GM12878 (cell line): ENCODE measurements at regions of chr5 and their contacts with region 1.

Region 1: DNA sequence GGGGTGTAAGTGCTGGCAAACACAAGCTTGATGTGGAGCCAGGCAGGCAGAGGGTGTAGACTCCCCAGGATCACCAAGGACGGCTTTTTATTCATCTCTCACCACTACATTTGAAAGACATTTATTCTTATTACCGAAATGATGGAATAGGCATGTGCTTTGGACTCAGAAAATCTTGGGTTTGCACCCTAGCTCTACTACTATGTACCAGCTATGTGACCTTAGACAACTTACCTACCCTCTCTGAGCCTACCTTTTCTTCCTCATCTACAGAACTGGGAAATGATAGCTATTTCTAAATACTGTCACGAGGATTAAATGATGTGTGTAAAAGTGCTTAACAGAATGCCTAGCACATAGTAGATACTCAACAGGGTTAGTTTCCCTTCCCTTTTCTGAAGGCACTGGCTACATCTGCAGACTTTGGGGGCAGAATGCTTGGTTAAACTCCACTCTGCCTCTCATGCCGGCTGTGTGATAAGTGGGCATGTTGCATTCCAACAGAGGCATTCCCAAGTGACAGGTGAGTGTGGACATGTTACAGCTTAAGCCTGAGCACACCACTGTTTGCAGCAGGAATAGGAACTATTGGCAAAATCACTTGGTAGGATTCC is 94.8 kb downstream of the SLC1A3 start:
- DNase-seq: peak; percentile 55
- ATAC-seq: peak; percentile 98
- H3K4me3 ChIP-seq: no peak overlapping the region
- H3K27ac ChIP-seq: peak overlapping the region; percentile 46
- H3K4me1 ChIP-seq: peaks cover 23% of the 10 kb centered on the region
- H3K27me3 ChIP-seq: no peaks in the 10 kb centered on the region
- CTCF ChIP-seq: no peak
- EP300 ChIP-seq: peak in 1 of 2 experiments; percentile 58; a peak in 2 of 4 replicates
- POLR2A ChIP-seq: no peak
- RAD21 ChIP-seq: no peak

Region 2: DNA sequence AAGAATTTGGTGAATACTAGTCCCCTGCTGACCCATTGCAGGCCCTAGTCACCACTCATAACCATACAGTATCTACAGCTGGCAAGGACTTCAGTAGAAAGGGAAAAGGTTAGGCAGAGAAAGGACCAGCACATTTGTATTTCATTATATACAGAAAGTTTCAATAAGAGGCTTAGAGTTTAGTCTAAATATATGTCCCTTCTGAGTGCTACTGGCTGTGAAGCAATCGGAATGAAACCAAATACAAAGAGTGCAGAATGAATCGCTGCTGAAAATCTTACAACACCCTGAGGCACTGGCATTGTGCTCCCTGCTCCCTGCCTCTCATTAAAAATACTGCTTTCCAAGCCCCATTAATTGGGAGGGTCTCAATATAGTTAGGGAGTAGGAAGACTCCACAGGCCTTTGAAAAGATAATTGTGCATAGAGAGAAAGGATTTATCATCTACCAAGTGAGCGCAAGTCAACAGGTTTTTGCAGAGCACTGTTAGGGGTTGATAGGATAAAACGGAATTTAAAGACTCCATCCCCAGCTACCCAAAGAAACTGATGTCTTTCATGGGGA is 16.0 kb after region 1 on chr5:
- CTCF ChIA-PET with region 1: interaction called, 202 read pairs
- POLR2A ChIA-PET with region 1: interaction called, 33 read pairs
- RAD21 ChIA-PET with region 1: interaction called, 65 read pairs
- SMC1A ChIA-PET with region 1: interaction called, 176 read pairs
- in situ Hi-C with region 1: no loop called
- intact Hi-C with region 1: no loop called
- DNase-seq: no peak
- ATAC-seq: no peak
- H3K4me3 ChIP-seq: no peak overlapping the region
- H3K27ac ChIP-seq: no peak overlapping the region
- H3K4me1 ChIP-seq: peaks cover 29% of the 10 kb centered on the region
- H3K27me3 ChIP-seq: no peaks in the 10 kb centered on the region
- CTCF ChIP-seq: no peak
- EP300 ChIP-seq: no peak
- POLR2A ChIP-seq: no peak
- RAD21 ChIP-seq: no peak

Region 3: DNA sequence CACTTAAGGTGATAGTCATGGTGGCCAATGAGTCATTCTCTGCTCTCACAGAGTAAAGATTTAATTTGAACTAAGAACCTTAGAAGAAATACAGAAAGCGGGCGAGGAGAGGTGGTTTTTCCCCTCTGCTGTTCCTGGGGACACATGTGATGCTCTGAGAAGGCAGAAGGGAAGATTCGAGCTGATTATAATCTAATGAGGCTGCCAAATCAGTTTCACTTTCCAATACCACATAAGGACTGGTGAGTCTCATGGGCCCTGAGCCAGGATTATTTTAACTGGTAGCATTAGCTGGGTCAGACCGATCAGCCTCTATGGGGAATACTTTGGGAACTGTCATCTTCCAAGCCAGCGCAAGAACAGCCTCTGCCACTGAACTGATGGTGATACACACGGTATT is 21.7 kb after region 1 on chr5:
- CTCF ChIA-PET with region 1: interaction called, 202 read pairs
- POLR2A ChIA-PET with region 1: interaction called, 33 read pairs
- RAD21 ChIA-PET with region 1: interaction called, 65 read pairs
- SMC1A ChIA-PET with region 1: interaction called, 176 read pairs
- in situ Hi-C with region 1: no loop called
- intact Hi-C with region 1: no loop called
- DNase-seq: peak; percentile 86
- ATAC-seq: peak; percentile 59
- H3K4me3 ChIP-seq: peak overlapping the region; percentile 60
- H3K27ac ChIP-seq: peak overlapping the region; percentile 96
- H3K4me1 ChIP-seq: peaks cover 54% of the 10 kb centered on the region
- H3K27me3 ChIP-seq: no peaks in the 10 kb centered on the region
- CTCF ChIP-seq: no peak
- EP300 ChIP-seq: no peak
- POLR2A ChIP-seq: no peak
- RAD21 ChIP-seq: no peak

Region 4: DNA sequence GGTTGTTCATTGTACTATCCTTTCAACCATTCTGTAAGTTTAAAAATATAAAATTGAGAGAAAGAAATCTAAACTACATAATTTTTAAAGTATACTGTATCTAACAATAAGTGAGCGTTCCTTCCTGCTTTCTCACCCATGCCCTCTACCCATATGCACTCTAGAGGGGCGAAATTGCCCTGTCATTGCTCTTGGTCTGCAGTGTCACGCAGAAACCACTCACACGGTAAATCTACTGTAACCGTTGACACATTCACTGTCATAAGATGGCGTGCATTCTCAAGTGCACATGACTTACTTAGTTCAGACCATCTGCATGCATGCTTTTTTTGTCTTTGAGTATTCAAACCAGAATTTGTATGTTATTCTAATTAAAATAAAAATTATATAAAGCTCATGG is 119.7 kb after region 1 on chr5:
- CTCF ChIA-PET with region 1: no interaction called
- POLR2A ChIA-PET with region 1: no interaction called
- RAD21 ChIA-PET with region 1: no interaction called
- SMC1A ChIA-PET with region 1: no interaction called
- in situ Hi-C with region 1: no loop called
- intact Hi-C with region 1: no loop called
- DNase-seq: no peak
- ATAC-seq: no peak
- H3K4me3 ChIP-seq: no peak overlapping the region
- H3K27ac ChIP-seq: no peak overlapping the region
- H3K4me1 ChIP-seq: no peaks in the 10 kb centered on the region
- H3K27me3 ChIP-seq: no peaks in the 10 kb centered on the region
- CTCF ChIP-seq: no peak
- EP300 ChIP-seq: no peak
- POLR2A ChIP-seq: no peak
- RAD21 ChIP-seq: no peak

Region 5: GRCh38 chr5:36915653-36916052 is 214.5 kb after region 1 on chr5:
- CTCF ChIA-PET with region 1: no interaction called
- POLR2A ChIA-PET with region 1: no interaction called
- RAD21 ChIA-PET with region 1: no interaction called
- SMC1A ChIA-PET with region 1: no interaction called
- in situ Hi-C with region 1: no loop called
- intact Hi-C with region 1: no loop called
- DNase-seq: no peak
- ATAC-seq: no peak
- H3K4me3 ChIP-seq: no peak overlapping the region
- H3K27ac ChIP-seq: no peak overlapping the region
- H3K4me1 ChIP-seq: no peaks in the 10 kb centered on the region
- H3K27me3 ChIP-seq: no peaks in the 10 kb centered on the region
- CTCF ChIP-seq: no peak
- EP300 ChIP-seq: no peak
- POLR2A ChIP-seq: no peak
- RAD21 ChIP-seq: no peak